Prostate gland (tissue), 2 donors: ENCODE measurements at regions of chr17 and their contacts with region 1.

Region 1: GRCh38 chr17:1005361-1005946 is 8.5 kb downstream of the TIMM22 start:
- DNase-seq: peak; percentile 77
- H3K4me3 ChIP-seq: peak overlapping the region in 1 of 2 donors; percentile 10
- H3K27ac ChIP-seq: peak overlapping the region; percentile 63 to 68
- H3K4me1 ChIP-seq: peaks cover 30% of the 10 kb centered on the region
- H3K27me3 ChIP-seq: no peaks in the 10 kb centered on the region
- CTCF ChIP-seq: no peak
- POLR2A ChIP-seq: no peak

Region 2: GRCh38 chr17:1047177-1047878 is 41.9 kb after region 1 on chr17:
- intact Hi-C with region 1: loop called (anchors 5 kb)
- DNase-seq: no peak
- H3K4me3 ChIP-seq: no peak overlapping the region
- H3K27ac ChIP-seq: peak overlapping the region; percentile 51 to 60
- H3K4me1 ChIP-seq: no peaks in the 10 kb centered on the region
- H3K27me3 ChIP-seq: no peaks in the 10 kb centered on the region
- CTCF ChIP-seq: no peak
- POLR2A ChIP-seq: no peak

Region 3: GRCh38 chr17:1055751-1056645 is 50.5 kb after region 1 on chr17:
- intact Hi-C with region 1: loop called (anchors 5 kb)
- DNase-seq: peak; percentile 64
- H3K4me3 ChIP-seq: no peak overlapping the region
- H3K27ac ChIP-seq: peak overlapping the region; percentile 36 to 70
- H3K4me1 ChIP-seq: peaks cover 6% of the 10 kb centered on the region
- H3K27me3 ChIP-seq: no peaks in the 10 kb centered on the region
- CTCF ChIP-seq: peak; percentile 64 to 86 (median 78)
- POLR2A ChIP-seq: no peak